ENCODE measurements at regions of chr2 and their contacts with region 1.

Region 1: DNA sequence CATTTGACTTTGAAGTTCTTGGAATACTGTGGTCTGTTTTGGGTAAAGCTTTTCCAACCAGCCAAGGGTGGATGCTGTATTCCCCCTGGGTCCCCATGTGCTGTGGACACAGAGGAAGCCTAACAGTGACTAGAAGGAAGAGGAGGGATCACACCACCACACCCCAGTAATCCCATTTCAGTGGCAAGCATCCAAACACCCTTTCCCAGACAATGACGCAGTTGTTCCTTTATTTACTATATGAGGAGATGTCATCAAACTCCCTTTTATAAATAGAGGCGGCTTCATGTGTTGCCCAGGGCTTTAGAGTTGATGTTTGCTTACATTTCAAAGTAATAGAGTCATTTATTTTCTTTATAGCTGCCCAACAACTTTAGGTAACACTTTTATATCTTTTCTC is 959.4 kb upstream of the GYPC start:
- DNase-seq: no peak
- ATAC-seq: no peak
- H3K4me3 ChIP-seq: no peak overlapping the region
- H3K27ac ChIP-seq: no peak overlapping the region
- H3K4me1 ChIP-seq: no peaks in the 10 kb centered on the region
- H3K27me3 ChIP-seq: no peaks in the 10 kb centered on the region
- CTCF ChIP-seq: no peak
- EP300 ChIP-seq: no peak
- POLR2A ChIP-seq: no peak
- RAD21 ChIP-seq: no peak

Region 2: DNA sequence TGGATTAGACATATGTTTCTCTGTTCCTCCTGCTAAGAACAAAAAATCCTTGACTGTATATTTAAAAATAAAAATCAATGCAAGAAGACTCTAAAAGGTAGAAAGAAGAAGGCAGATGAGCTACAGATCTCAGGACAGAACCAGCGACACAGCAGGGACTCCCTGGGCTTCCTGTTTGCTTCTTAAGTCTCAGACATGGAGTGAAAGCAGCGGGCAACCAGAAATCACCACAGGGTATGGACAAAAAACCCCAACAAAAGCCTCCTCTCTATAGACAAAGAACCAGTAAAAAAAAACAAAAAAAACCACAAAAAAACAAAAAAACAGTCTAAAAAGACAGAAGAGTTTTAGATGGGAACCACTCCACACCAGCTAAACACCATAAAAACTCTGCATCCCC is 11.6 kb before region 1 on chr2:
- CTCF ChIA-PET with region 1: no interaction called
- POLR2A ChIA-PET with region 1: no interaction called
- RAD21 ChIA-PET with region 1: no interaction called
- SMC1A ChIA-PET with region 1: no interaction called
- in situ Hi-C with region 1: no loop called
- intact Hi-C with region 1: loop called (anchors 1 kb)
- DNase-seq: no peak
- ATAC-seq: no peak
- H3K4me3 ChIP-seq: no peak overlapping the region
- H3K27ac ChIP-seq: no peak overlapping the region; the same call in 1 of the 2 replicates
- H3K4me1 ChIP-seq: 0 out of 2 replicates have a peak, but pooled peaks cover 3% of the 10 kb centered on the region
- H3K27me3 ChIP-seq: no peaks in the 10 kb centered on the region
- CTCF ChIP-seq: no peak
- EP300 ChIP-seq: no peak
- POLR2A ChIP-seq: no peak
- RAD21 ChIP-seq: no peak

Region 3: GRCh38 chr2:125721072-125721721 is 24.6 kb after region 1 on chr2:
- CTCF ChIA-PET with region 1: no interaction called
- POLR2A ChIA-PET with region 1: no interaction called
- RAD21 ChIA-PET with region 1: no interaction called
- SMC1A ChIA-PET with region 1: no interaction called
- in situ Hi-C with region 1: no loop called
- intact Hi-C with region 1: no loop called
- DNase-seq: no peak
- ATAC-seq: no peak
- H3K4me3 ChIP-seq: no peak overlapping the region
- H3K27ac ChIP-seq: no peak overlapping the region
- H3K4me1 ChIP-seq: no peaks in the 10 kb centered on the region
- H3K27me3 ChIP-seq: no peaks in the 10 kb centered on the region
- CTCF ChIP-seq: no peak
- EP300 ChIP-seq: no peak
- POLR2A ChIP-seq: no peak
- RAD21 ChIP-seq: no peak